ENCODE measurements at regions of chr15 and their contacts with region 1.

Region 1: GRCh38 chr15:66603301-66604179 is 37.7 kb upstream of the LCTL start:
- DNase-seq: peak; percentile 61 to 86
- ATAC-seq: peak; percentile 80 to 97
- H3K4me3 ChIP-seq: no peak overlapping the region
- H3K27ac ChIP-seq: no peak overlapping the region
- H3K4me1 ChIP-seq: no peaks in the 10 kb centered on the region
- CTCF ChIP-seq: peak; percentile 95
- EP300 ChIP-seq: no peak
- POLR2A ChIP-seq: no peak
- RAD21 ChIP-seq: peak; percentile 92

Region 2: DNA sequence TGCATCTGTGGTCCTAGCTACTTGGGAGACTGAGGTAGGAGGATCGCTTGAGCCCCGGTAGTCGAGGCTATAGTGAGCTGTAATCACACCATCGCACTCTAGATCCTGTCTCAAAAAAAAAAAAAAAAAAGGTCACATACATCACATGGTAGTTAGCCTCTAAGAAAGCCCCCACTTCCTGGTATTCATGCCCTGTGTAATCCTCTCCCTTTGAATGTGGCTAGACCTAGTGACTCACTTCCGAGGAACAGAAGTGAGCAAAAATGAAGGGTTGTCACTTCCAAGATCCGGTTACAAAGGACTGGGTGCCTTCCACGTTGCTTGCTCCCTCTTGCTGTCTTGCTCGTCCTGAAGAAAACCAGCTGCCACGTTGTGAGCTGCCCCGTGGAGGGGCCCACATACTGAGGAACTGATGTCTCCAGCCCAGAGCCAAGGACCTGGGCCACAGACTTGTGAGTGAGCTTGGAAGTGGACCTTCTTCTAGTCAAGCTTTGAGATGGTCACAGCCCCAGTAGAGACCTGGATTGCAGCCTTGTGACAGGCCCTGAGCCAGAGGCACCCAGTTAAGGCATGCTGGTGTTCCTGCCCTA is 25.2 kb before region 1 on chr15:
- CTCF ChIA-PET with region 1: interaction called, 10 read pairs
- POLR2A ChIA-PET with region 1: no interaction called
- DNase-seq: no peak
- ATAC-seq: no peak
- H3K4me3 ChIP-seq: no peak overlapping the region
- H3K27ac ChIP-seq: no peak overlapping the region
- H3K4me1 ChIP-seq: no peaks in the 10 kb centered on the region
- CTCF ChIP-seq: no peak
- EP300 ChIP-seq: no peak
- POLR2A ChIP-seq: no peak
- RAD21 ChIP-seq: no peak

Region 3: DNA sequence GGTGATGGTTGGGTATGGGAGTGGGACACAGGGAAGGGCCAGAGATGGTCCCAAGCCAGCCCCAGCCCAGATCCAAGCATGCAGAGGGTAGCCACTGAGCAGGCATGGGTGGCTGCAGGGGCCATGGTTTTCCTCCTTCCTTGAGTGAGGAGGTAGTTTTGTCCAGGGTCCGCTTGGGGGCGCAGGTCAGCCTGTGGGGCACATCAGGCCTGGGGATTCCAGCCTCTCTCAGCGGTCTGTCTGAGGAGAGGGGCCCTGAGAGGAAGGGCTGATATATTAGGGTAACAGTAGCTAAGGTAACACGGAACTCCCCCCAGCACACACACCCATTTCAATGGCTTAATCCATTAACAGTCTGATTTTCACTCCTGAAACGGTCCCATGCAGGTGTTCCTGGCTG is 15.0 kb before region 1 on chr15:
- CTCF ChIA-PET with region 1: interaction called, 14 read pairs
- POLR2A ChIA-PET with region 1: no interaction called
- DNase-seq: no peak
- ATAC-seq: peak; percentile 58 to 79; a peak in 4 of 6 replicates
- H3K4me3 ChIP-seq: no peak overlapping the region
- H3K27ac ChIP-seq: no peak overlapping the region
- H3K4me1 ChIP-seq: no peaks in the 10 kb centered on the region
- CTCF ChIP-seq: peak; percentile 18; the same call in 1 of the 3 replicates
- EP300 ChIP-seq: no peak
- POLR2A ChIP-seq: no peak
- RAD21 ChIP-seq: peak in 1 of 2 experiments; percentile 40; a peak in 2 of 5 replicates